ENCODE measurements at regions of chr2 and their contacts with region 1.

Region 1: GRCh38 chr2:158006961-158007719 is 94.5 kb upstream of the UPP2 start:
- DNase-seq: peak; percentile 35
- H3K4me3 Mint-ChIP-seq: no peak overlapping the region
- H3K27ac Mint-ChIP-seq: no peak overlapping the region
- H3K4me1 Mint-ChIP-seq: peaks cover 15% of the 10 kb centered on the region
- H3K27me3 Mint-ChIP-seq: no peaks in the 10 kb centered on the region

Region 2: GRCh38 chr2:157492189-157492773 is 514.9 kb before region 1 on chr2:
- CTCF ChIA-PET with region 1: interaction called, 8 read pairs
- intact Hi-C with region 1: loop called (anchors 1 kb)
- DNase-seq: peak; percentile 89
- H3K4me3 Mint-ChIP-seq: no peak overlapping the region
- H3K27ac Mint-ChIP-seq: no peak overlapping the region
- H3K4me1 Mint-ChIP-seq: peaks cover 62% of the 10 kb centered on the region
- H3K27me3 Mint-ChIP-seq: no peaks in the 10 kb centered on the region

Region 3: DNA sequence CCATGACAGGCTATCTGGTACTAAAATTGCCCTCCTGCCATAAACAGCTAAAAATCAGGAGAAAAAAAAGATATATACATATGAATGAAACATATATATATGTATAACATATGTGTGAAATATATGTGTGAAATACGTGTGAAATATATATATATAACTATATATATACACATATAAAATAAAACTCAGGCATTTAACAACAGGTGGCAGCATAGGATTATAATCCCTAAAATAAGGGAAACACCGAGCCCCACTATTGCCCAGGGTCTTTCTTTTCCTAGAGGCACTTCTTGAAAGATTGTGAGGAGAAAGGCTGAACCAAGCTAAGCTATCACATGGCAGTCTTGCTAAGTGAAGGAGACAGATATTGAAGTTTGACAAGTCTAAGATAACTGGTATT is 497.4 kb before region 1 on chr2:
- CTCF ChIA-PET with region 1: interaction called, 10 read pairs
- intact Hi-C with region 1: loop called (anchors 1 kb)
- DNase-seq: no peak
- H3K4me3 Mint-ChIP-seq: no peak overlapping the region
- H3K27ac Mint-ChIP-seq: no peak overlapping the region
- H3K4me1 Mint-ChIP-seq: peaks cover 3% of the 10 kb centered on the region
- H3K27me3 Mint-ChIP-seq: peaks cover 3% of the 10 kb centered on the region

Region 4: DNA sequence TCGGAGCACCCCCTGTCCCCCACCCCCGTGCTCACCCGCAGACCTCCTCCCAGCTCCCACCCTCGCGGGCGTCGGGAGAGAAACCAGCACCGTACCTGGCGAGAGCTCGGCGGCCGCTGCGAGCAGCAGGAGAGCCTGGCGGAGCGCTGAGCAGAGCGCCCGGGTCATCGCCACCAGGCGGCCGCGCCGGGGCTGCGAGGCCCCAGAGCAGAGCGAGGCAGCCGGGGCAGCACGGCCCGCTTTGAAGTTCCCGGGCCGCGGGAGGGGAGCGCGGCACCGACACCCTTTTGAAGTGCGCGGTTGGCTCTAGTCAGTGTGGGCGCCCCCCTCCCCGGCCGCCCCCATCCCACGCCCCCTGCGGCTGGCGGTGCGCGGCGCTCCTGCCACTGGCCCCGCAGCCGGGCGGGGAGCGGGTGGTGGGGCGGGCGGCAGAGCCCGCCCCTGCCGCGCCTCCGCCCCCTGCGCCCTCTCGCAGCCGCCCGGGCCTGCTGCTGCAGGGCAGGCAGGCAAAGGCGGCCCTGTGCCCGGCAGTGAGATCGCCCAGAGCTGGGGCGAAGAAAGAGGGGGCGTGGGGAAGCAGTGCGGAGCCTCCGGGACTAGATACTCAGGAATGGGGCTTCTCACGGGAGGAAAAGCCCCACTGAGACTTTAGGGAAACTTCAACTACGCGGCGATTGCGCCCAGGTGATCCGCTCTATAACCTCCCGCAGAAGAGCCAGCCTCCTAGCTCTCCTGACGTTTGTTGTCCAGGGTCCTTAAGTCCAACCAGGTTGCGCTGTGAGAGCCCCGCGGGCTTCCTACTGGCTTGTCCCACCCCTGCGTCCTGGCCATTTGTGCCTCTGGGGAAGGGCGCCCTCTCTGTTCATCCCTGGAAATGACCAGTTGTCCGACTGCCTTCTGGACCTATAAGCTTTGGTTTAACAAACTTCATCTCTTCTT is 378.4 kb before region 1 on chr2 and contains the start of gene ACVR1C:
- CTCF ChIA-PET with region 1: interaction called, 3 read pairs
- intact Hi-C with region 1: loop called (anchors 1 kb)
- DNase-seq: peak; percentile 83
- H3K4me3 Mint-ChIP-seq: peak within 1 kb of the TSS; percentile 94
- H3K27ac Mint-ChIP-seq: no peak within 1 kb of the TSS
- H3K4me1 Mint-ChIP-seq: peaks cover 37% of the 10 kb centered on the region
- H3K27me3 Mint-ChIP-seq: peaks cover 2% of the 10 kb centered on the region
- total RNA-seq, gene ACVR1C: 3.5 to 3.6 TPM

Region 5: DNA sequence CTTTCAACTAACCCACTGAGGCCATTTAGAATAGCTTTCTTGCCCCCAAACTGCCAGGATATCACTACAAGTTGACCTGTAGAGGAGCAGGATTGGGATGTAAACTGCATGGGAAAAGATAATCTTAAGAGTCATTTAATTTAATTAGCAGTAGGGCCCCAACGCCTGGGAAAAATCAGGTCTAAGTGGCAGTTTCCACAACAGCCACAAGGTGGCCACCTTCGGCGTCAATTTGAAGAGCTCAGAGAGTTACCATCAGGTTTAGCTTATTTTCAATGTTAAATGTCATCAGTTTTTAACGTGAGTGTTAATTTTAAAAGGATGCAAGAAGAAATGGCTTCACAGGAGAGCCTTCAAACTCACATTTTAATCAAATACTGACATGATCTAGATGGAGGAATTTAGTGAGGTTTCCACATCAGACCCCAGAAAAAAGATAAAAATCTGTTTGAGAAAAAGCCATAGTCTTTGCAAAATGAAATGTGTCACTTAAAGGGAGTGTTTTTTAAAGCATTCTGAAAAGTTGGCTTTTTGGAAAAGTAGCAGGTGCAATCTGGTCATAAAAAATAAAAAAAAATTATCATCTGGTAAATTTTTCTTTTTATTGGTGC is 17.3 kb after region 1 on chr2:
- CTCF ChIA-PET with region 1: interaction called, 11 read pairs
- intact Hi-C with region 1: no loop called
- DNase-seq: peak; percentile 76
- H3K4me3 Mint-ChIP-seq: no peak overlapping the region
- H3K27ac Mint-ChIP-seq: no peak overlapping the region
- H3K4me1 Mint-ChIP-seq: peaks cover 7% of the 10 kb centered on the region
- H3K27me3 Mint-ChIP-seq: no peaks in the 10 kb centered on the region